Sciatic nerve (tissue), 2 donors: ENCODE measurements at regions of chr12 and their contacts with region 1.

Region 1: GRCh38 chr12:13211859-13212664 is 15.5 kb downstream of the EMP1 start:
- DNase-seq: peak; percentile 78
- ATAC-seq: peak; percentile 67

Region 2: DNA sequence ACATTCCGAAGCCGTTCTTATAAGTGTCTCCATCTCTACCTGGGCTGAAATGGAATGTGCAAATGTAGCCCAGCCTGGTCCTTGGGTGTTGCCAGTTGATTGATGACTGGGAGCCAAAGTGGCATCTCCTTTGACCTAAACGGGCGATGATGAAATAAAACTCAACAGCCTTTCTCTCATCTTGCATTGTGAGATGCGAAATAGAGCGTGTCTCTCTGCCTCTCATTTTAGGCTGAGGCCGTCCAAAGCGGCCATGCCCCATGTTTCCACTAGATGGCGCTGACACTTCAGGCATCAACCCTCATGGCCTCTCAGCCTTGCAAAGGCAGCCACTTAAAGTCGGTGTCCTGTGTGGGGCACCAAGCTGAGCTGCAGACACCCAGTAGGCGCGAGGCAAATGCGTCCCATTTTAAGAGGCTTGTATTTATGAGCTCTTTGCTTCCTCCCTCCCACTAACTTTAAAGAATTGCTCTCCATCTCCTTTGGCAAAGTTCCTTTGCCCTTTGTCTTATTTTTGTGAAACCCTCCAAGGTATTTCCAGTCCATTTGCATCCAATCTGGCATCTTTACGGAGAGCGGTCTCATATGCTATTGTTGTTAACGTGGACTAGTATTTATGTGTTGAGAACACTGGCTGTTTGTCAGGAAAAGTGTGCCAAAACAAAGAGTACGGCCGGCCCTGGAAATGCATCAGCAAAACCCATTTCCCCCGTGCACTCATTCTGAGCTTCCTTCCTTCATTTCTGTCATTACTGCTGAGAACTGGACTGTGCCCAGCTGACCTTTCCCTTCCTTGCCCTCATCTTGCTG is 295.7 kb before region 1 on chr12:
- intact Hi-C with region 1: loop called (anchors 5 kb)
- DNase-seq: peak; percentile 94
- ATAC-seq: peak; percentile 95

Region 3: DNA sequence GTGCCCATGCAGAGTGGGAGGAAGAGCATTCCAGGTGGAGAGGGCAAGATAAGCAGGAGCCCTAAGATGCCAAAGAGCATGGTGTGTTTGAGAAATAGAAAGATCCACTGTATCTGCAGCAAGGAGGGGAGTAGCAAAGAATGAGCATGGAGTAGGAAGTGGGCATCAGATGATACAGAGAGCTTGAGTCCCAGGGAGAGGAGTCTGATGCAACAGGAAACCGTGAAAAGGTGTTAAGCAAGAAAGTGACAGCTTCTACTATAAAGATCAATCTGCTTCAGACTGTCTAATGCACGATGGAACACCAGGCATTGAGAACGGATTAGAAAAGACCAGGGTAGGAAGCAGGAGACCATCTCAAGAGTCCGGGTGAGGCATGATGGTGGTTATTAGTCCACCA is 247.8 kb before region 1 on chr12:
- intact Hi-C with region 1: no loop called
- DNase-seq: no peak
- ATAC-seq: no peak

Region 4: DNA sequence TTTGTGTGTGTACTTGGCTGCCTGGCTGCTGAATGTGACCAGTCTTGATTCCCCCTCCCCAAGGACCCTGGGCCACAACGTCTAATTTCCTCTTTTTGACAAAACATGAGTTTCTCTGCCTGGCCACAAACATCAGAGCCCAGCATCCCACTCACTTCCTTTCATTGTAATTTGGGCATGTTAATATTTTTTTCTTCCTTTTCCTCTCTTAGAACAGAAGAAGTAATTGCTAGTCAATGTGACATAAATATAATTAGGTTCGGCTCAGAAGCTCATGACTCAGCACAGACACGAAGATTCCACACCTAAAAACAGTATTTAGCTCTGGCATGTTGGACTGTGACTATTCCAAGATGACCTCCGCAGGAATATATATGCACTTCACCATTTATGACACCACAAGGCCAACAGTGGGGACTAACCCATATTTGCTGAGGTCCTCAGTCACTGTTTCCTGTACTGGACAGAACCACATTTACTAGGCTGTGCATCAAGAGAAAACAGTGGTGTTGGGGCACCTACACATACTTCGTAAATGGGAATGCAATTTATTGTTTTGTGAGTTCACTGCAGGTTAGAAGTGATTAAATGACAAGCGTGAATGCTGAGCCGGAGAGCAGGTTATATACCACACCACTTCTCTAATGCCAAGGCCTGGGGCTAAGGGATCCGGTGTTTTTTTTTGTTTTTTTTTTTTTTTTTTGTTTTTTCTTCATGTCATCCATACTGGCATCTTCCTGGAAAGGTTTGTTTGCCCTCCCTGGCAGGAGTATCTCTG is 112.8 kb before region 1 on chr12:
- intact Hi-C with region 1: loop called (anchors 5 kb)
- DNase-seq: peak; percentile 64
- ATAC-seq: peak; percentile 1

Region 5: DNA sequence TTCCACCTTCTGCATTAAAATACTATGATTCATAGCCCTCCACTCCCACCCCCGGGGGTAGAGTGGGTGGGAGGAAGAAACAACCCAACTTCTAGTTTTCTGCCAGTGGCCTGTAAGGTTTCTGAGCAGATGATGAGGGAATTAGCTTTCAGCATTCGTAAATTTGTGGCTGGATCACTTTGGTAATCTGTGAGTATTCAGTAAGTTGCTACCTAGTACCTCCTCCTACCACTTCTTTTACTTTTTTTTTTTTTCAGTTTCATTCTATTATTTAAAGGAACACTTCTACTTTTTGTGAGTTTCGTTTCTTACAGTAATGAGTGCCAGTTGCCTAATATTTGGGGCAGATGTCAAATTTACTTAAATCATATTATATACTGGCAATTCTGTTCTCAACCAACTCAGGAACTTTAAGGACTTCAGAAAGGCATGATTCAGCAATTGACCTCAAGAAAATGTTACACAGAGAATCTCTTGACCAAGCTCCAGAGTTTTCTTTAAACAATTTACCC is 58.0 kb before region 1 on chr12:
- intact Hi-C with region 1: no loop called
- DNase-seq: no peak
- ATAC-seq: no peak